GM18951 (cell line): ENCODE measurements at regions of chr18 and their contacts with region 1.

Region 1: GRCh38 chr18:42298759-42299675 is 344.0 kb downstream of the PIK3C3 start:
- POLR2A ChIP-seq: no peak

Region 2: DNA sequence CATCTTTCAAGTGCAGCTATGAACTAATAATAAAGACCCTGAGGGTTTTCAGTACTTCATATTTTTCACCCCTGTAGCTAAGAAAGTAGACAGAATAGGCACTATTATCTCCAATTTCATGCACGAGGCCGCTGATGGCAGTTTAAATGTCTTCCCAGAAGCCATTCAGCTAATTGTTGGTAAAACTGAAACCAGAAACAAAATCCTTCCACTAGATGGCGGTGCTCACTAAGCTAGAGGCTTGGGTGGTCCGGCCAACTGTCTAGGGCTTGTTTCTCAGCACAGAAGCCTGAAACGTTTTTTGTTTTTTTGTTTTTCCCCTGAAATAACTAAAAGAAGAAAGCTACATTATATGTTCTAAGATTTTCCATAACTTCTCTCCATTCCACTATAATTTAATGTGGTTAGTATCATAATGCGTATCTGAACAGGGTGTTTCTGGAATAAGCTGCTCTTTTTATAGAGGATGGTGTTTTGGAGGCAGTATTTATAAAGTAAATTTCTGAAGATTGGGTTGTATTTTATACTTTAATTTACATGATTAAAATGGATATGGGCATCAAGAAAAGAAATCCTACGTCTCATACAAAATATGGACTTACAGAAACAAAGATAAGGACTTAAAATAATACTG is 184.6 kb before region 1 on chr18:
- in situ Hi-C with region 1: loop called (anchors 25 kb)
- POLR2A ChIP-seq: no peak